ENCODE measurements at regions of chr2 and their contacts with region 1.

Region 1: GRCh38 chr2:191501561-191502168 is 176.3 kb upstream of the NABP1 start:
- DNase-seq: peak; percentile 37
- ATAC-seq: peak; percentile 61; the same call in 1 of the 2 replicates
- H3K4me3 ChIP-seq: no peak overlapping the region
- H3K27ac ChIP-seq: no peak overlapping the region
- H3K4me1 ChIP-seq: no peaks in the 10 kb centered on the region
- H3K27me3 ChIP-seq: no peaks in the 10 kb centered on the region
- CTCF ChIP-seq: peak; percentile 40 to 85 (median 69)
- POLR2A ChIP-seq: no peak
- RAD21 ChIP-seq: peak; percentile 88

Region 2: DNA sequence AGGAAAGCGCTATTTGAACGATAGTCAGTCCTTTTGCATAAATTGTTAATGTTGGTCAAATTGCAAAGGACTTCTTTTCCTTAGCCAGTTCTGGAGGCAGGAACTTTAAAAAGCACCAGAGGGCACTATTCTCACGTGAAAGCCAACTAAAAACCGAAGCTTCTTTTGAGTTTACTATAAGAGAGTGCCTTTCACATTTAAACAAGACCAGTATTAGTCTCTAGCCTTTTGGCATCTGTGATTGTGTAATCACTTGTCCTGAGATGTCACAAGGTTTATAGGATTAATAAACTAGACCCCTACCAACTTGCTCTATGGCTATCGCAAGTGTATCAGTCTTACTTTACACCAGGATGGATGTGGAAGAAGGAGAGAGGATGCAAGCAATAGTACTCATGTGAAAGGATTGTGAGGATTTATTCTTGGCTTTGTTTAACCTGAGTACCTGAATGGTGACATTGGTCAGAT is 336.5 kb before region 1 on chr2:
- CTCF ChIA-PET with region 1: interaction called, 8 read pairs
- POLR2A ChIA-PET with region 1: no interaction called
- RAD21 ChIA-PET with region 1: interaction called in 1 of 2 experiments, 3 read pairs
- intact Hi-C with region 1: loop called (anchors 1 kb)
- DNase-seq: peak; percentile 36
- ATAC-seq: peak; percentile 94
- H3K4me3 ChIP-seq: no peak overlapping the region
- H3K27ac ChIP-seq: no peak overlapping the region
- H3K4me1 ChIP-seq: peaks cover 2 to 12% of the 10 kb centered on the region in 2 experiments; a peak in 1 of 4 replicates
- H3K27me3 ChIP-seq: no peaks in the 10 kb centered on the region
- CTCF ChIP-seq: peak; percentile 50 to 87 (median 86)
- POLR2A ChIP-seq: no peak
- RAD21 ChIP-seq: peak; percentile 89

Region 3: DNA sequence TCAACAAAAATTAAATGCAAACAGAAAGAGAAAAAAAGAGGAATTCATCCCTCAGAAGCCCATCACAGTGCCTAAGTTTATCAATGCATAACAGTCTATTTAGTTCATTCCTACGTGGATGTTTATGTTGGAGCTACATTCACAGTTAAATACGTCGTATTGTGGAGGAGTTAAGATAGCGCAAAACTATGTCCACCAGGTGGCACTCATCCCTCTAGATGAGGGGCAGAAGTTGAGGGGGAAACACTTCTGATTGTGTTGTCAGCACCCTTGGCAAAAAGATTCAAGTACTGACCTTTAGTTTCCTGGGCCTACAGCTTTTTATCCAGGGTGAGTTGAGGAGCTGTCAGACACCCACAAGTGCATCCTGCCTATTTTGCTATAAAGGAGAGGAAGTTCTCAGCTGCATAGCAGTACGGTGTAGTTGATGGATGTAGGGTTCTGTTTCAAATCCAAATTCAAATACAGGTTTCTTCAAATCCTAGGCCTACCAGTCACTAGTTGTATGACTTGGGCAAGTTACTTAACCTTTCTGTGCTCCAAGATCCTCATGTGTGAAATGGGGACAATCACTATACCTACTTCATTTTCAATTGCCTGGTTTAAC is 283.3 kb before region 1 on chr2:
- CTCF ChIA-PET with region 1: interaction called, 27 read pairs
- POLR2A ChIA-PET with region 1: no interaction called
- RAD21 ChIA-PET with region 1: no interaction called
- intact Hi-C with region 1: loop called (anchors 1 kb)
- DNase-seq: peak; percentile 67
- ATAC-seq: peak; percentile 92
- H3K4me3 ChIP-seq: no peak overlapping the region
- H3K27ac ChIP-seq: no peak overlapping the region
- H3K4me1 ChIP-seq: peaks cover 10 to 27% of the 10 kb centered on the region in 2 experiments; a peak in 3 of 4 replicates
- H3K27me3 ChIP-seq: no peaks in the 10 kb centered on the region
- CTCF ChIP-seq: peak; percentile 73 to 90 (median 76)
- POLR2A ChIP-seq: no peak
- RAD21 ChIP-seq: peak; percentile 83

Region 4: GRCh38 chr2:191231995-191232394 is 269.7 kb before region 1 on chr2:
- CTCF ChIA-PET with region 1: no interaction called
- POLR2A ChIA-PET with region 1: no interaction called
- RAD21 ChIA-PET with region 1: no interaction called
- intact Hi-C with region 1: loop called (anchors 5 kb)
- DNase-seq: no peak
- ATAC-seq: no peak
- H3K4me3 ChIP-seq: no peak overlapping the region
- H3K27ac ChIP-seq: no peak overlapping the region
- H3K4me1 ChIP-seq: peaks cover 0 to 8% of the 10 kb centered on the region in 2 experiments; a peak in 1 of 4 replicates
- H3K27me3 ChIP-seq: no peaks in the 10 kb centered on the region
- CTCF ChIP-seq: peak; percentile 23 to 53 (median 40); a peak in 4 of 6 replicates
- POLR2A ChIP-seq: no peak
- RAD21 ChIP-seq: peak; percentile 68

Region 5: GRCh38 chr2:191245046-191245868 is 256.4 kb before region 1 on chr2 and contains the start of gene MYO1B:
- CTCF ChIA-PET with region 1: no interaction called
- POLR2A ChIA-PET with region 1: no interaction called
- RAD21 ChIA-PET with region 1: interaction called in 1 of 2 experiments, 3 read pairs
- intact Hi-C with region 1: loop called (anchors 1 kb)
- DNase-seq: peak; percentile 59
- ATAC-seq: peak; percentile 86
- H3K4me3 ChIP-seq: peak within 1 kb of the TSS; percentile 71 to 81
- H3K27ac ChIP-seq: peak within 1 kb of the TSS; percentile 76
- H3K4me1 ChIP-seq: peaks cover 15 to 32% of the 10 kb centered on the region in 2 experiments; a peak in 3 of 4 replicates
- H3K27me3 ChIP-seq: no peaks in the 10 kb centered on the region
- CTCF ChIP-seq: peak; percentile 33 to 54 (median 41); a peak in 4 of 6 replicates
- POLR2A ChIP-seq: peak; percentile 56
- RAD21 ChIP-seq: peak; percentile 87
- total RNA-seq, gene MYO1B: 51.7 TPM

Region 6: GRCh38 chr2:191369036-191369435 is 132.6 kb before region 1 on chr2:
- CTCF ChIA-PET with region 1: no interaction called
- POLR2A ChIA-PET with region 1: no interaction called
- RAD21 ChIA-PET with region 1: no interaction called
- intact Hi-C with region 1: no loop called
- DNase-seq: no peak
- ATAC-seq: no peak
- H3K4me3 ChIP-seq: no peak overlapping the region
- H3K27ac ChIP-seq: no peak overlapping the region
- H3K4me1 ChIP-seq: no peaks in the 10 kb centered on the region
- H3K27me3 ChIP-seq: no peaks in the 10 kb centered on the region
- CTCF ChIP-seq: peak; percentile 39 to 52 (median 39); a peak in 5 of 6 replicates
- POLR2A ChIP-seq: no peak
- RAD21 ChIP-seq: peak; percentile 48